Activated naive CD4-positive, alpha-beta T cell treated with anti-CD3 and anti-CD28 coated beads for 36 hours (primary cell): ENCODE measurements at regions of chr1 and their contacts with region 1.

Region 1: DNA sequence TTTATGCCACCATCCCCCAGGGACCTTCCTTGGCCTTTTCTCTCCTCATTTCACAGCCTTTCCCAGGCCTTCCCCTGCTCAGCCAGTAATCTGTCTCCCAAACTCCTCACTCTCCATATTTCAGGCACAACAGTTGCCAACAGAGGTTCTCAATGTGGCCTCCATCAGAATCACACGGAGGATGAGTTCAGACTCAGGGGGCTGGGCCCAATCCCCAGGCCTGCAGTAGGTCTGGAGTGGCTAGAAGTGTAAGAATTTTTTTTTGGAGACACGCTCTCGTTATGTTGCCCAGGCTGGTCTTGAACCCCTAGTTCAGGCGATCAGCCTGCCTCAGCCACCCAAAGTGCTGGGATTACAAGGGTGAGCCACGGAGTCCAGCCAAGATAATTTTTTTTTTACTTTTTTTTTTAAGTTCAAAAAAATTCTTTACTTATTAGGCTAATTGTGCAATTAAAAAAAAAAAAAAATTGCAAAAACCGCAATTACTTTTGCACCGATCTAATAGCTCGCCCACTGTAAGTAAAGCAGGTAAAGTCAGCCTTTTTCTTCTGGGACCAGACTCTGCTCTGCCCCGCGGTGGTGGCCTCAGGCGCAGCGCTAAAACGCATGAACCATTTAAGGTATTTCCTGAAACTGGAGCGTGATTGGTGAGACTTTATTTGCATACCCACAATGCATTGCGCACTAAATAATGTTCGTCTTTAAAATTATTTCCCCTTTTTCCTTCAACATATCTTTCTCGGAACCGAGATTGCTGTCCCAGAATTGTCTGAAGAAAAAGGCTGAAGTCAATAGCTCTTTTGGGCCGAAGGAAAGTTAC is 18.7 kb downstream of the KIAA2013 start:
- DNase-seq: peak; percentile 96
- H3K4me3 Mint-ChIP-seq: peak overlapping the region; percentile 96
- H3K27ac Mint-ChIP-seq: peak overlapping the region; percentile 97
- H3K4me1 Mint-ChIP-seq: peaks cover 35% of the 10 kb centered on the region
- H3K27me3 Mint-ChIP-seq: peaks cover 6% of the 10 kb centered on the region

Region 2: GRCh38 chr1:11735854-11736745 is 171.4 kb before region 1 on chr1 and contains the start of gene AGTRAP:
- CTCF ChIA-PET with region 1: no interaction called
- intact Hi-C with region 1: loop called (anchors 5 kb)
- DNase-seq: peak; percentile 92
- H3K4me3 Mint-ChIP-seq: peak within 1 kb of the TSS; percentile 96
- H3K27ac Mint-ChIP-seq: peak within 1 kb of the TSS; percentile 93
- H3K4me1 Mint-ChIP-seq: peaks cover 51% of the 10 kb centered on the region
- H3K27me3 Mint-ChIP-seq: no peaks in the 10 kb centered on the region
- total RNA-seq, gene AGTRAP: 20.3 to 21.7 TPM

Region 3: GRCh38 chr1:11838349-11839272 is 68.9 kb before region 1 on chr1:
- CTCF ChIA-PET with region 1: interaction called, 4 read pairs
- intact Hi-C with region 1: loop called (anchors 1 kb)
- DNase-seq: peak; percentile 83
- H3K4me3 Mint-ChIP-seq: no peak overlapping the region
- H3K27ac Mint-ChIP-seq: no peak overlapping the region
- H3K4me1 Mint-ChIP-seq: no peaks in the 10 kb centered on the region
- H3K27me3 Mint-ChIP-seq: no peaks in the 10 kb centered on the region

Region 4: DNA sequence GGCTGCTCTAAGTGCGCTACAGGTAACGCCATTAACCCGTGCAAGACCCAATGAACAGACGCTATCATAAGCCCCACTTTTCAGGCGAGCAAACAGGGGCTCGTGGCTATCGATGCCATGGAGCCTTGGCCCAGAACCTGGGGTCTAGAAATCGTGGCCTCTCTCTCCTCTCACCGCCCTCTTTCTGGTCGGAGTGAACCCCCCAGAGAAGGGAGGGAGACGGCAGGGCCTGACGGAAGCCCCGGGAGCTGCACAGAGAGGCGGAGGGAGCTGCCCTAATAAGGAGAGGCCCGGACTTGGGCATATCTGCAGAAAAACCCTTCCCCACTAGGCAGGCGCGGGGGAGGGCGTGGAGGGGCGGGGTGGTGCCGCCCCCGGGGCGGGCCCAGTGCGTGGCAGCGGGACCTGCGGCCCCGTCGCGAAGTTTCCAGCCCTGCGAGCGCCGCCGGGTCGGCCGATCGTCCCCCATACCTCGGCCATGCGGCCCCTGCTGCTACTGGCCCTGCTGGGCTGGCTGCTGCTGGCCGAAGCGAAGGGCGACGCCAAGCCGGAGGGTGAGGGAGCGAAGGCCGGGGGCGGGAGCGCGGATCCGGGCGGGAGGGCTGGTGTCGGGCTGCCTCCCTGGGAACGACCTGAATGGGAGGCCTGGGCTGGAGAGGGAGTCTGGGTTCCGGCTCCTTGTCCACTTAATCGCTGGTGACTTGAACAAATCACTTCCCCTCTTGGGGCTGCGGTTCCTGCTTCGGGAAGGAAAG is 27.0 kb after region 1 on chr1 and contains the start of gene PLOD1:
- CTCF ChIA-PET with region 1: no interaction called
- intact Hi-C with region 1: loop called (anchors 1 kb)
- DNase-seq: peak; percentile 88
- H3K4me3 Mint-ChIP-seq: peak within 1 kb of the TSS; percentile 75
- H3K27ac Mint-ChIP-seq: no peak within 1 kb of the TSS
- H3K4me1 Mint-ChIP-seq: peaks cover 7% of the 10 kb centered on the region
- H3K27me3 Mint-ChIP-seq: no peaks in the 10 kb centered on the region
- total RNA-seq, gene PLOD1: 6.7 to 9.0 TPM

Region 5: DNA sequence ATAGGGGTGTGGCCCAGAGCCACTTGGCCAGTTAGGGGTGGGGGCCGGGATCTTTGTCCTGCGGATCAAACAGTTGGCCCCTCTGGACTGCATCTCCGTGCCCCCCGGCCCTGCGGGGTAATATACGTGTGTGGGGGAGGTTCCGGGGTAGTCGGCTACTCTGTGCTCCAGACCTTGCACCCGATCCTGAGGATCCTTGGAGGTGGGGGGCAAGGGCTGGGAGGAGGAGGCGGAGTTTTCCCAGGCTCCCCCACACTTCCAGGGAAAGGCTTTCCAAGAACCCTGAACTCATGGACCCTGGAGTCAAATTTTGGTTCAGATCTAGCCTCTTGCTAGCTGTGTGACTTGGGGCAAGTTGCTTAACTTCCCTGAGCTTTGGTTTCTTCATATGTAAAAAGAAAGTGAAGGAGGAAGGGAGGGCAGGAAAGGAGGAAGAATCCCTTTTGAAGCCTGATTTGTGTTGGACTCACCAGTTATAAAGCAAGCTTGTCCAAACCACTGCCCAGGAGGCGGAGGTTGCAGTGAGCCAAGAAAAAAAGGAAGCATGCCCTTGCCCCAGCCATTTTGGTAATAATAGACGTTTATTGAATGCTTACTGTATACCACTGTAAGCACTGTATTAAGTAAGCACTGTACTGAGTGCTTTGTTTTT is 112.5 kb after region 1 on chr1:
- CTCF ChIA-PET with region 1: no interaction called
- intact Hi-C with region 1: loop called (anchors 1 kb)
- DNase-seq: no peak
- H3K4me3 Mint-ChIP-seq: peak overlapping the region; percentile 82
- H3K27ac Mint-ChIP-seq: peak overlapping the region; percentile 56
- H3K4me1 Mint-ChIP-seq: peaks cover 8% of the 10 kb centered on the region
- H3K27me3 Mint-ChIP-seq: no peaks in the 10 kb centered on the region

Region 6: GRCh38 chr1:12067900-12068821 is 160.7 kb after region 1 on chr1:
- CTCF ChIA-PET with region 1: no interaction called
- intact Hi-C with region 1: loop called (anchors 5 kb)
- DNase-seq: peak; percentile 89
- H3K4me3 Mint-ChIP-seq: peak overlapping the region; percentile 53
- H3K27ac Mint-ChIP-seq: peak overlapping the region; percentile 92
- H3K4me1 Mint-ChIP-seq: peaks cover 52% of the 10 kb centered on the region
- H3K27me3 Mint-ChIP-seq: peaks cover 31% of the 10 kb centered on the region